Mammary epithelial cell (primary cell): ENCODE measurements at regions of chr12 and their contacts with region 1.

Region 1: DNA sequence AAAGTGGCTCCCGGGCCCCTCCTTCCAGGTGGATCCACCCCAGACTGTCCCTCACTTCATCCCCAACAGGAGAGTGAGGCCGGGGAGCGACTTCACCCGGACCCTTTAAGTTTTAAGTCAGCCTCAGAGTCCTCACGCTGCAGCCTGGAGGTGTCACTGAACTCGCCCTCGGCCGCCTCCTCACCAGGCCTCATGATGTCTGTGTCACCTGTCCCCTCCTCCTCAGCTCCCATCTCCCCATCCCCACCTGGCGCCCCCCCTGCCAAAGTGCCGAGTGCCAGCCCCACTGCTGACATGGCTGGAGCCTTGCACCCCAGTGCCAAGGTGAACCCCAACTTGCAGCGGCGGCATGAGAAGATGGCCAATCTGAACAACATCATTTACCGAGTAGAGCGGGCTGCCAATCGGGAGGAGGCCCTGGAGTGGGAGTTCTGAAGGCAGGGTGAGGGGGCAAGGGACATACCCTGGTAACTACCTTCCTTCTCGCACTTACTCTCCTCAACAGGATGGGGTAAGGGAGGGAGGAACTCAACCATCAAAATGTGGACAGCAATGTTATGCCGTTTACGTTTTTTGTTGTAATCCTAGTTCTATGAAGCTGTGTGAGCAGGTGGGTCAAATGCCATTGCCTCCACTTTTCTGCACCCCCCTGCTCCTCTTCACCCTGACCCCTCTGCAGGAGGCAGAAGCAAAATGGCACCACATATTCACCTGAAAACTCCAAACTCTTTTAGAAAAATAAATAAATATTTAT is 20.8 kb downstream of the PHETA1 start:
- DNase-seq: no peak
- H3K4me3 ChIP-seq: no peak overlapping the region
- H3K27ac ChIP-seq: no peak overlapping the region
- H3K4me1 ChIP-seq: no peaks in the 10 kb centered on the region
- H3K27me3 ChIP-seq: no peaks in the 10 kb centered on the region
- CTCF ChIP-seq: no peak

Region 2: DNA sequence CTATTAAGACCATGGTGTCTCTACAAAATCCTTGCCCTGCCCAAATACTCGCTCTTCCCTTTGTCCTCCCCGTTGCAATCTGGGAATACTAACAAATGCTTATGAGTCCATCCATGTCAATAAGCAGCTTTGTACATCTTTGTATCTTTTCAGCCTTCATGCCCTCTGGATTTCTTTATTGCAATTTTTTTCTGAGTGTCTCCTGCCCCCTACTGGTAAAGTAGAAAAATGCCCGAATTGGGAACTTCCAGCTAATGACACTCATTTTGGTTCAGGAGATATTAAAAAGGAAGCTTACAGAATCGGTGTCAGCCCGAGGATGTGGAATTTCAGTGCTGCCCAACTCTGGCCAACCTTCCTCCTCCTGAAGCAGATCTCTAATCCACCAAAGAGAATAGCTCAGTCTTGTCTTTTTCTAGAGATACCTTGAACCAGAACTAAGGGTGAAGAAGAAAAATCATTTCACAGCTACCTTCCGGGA is 103.6 kb after region 1 on chr12:
- CTCF ChIA-PET with region 1: no interaction called
- dilution Hi-C with region 1: loop called (anchors 5 kb)
- in situ Hi-C with region 1: no loop called
- intact Hi-C with region 1: no loop called
- DNase-seq: peak; percentile 26
- H3K4me3 ChIP-seq: no peak overlapping the region
- H3K27ac ChIP-seq: no peak overlapping the region
- H3K4me1 ChIP-seq: no peaks in the 10 kb centered on the region
- H3K27me3 ChIP-seq: no peaks in the 10 kb centered on the region
- CTCF ChIP-seq: peak; percentile 74 to 79